ENCODE measurements at regions of chr19 and their contacts with region 1.

Region 1: GRCh38 chr19:16382775-16383543 is 58.3 kb downstream of the KLF2 start:
- DNase-seq: peak; percentile 95
- H3K4me3 ChIP-seq: no peak overlapping the region
- H3K27ac ChIP-seq: peak overlapping the region; percentile 79 to 91 (median 86)
- H3K4me1 ChIP-seq: peaks cover 0 to 33% (median 29%) of the 10 kb centered on the region in 4 donors
- H3K27me3 ChIP-seq: no peaks in the 10 kb centered on the region
- CTCF ChIP-seq: peak; percentile 80 to 86 (median 82)
- EP300 ChIP-seq: no peak
- POLR2A ChIP-seq: no peak

Region 2: GRCh38 chr19:16247353-16248182 is 135.4 kb before region 1 on chr19:
- intact Hi-C with region 1: loop called (anchors 1 kb)
- DNase-seq: peak; percentile 94
- H3K4me3 ChIP-seq: no peak overlapping the region
- H3K27ac ChIP-seq: no peak overlapping the region
- H3K4me1 ChIP-seq: peaks cover 0 to 7% (median 0%) of the 10 kb centered on the region in 4 donors
- H3K27me3 ChIP-seq: no peaks in the 10 kb centered on the region
- CTCF ChIP-seq: peak; percentile 92 to 99 (median 96)
- EP300 ChIP-seq: no peak
- POLR2A ChIP-seq: no peak

Region 3: DNA sequence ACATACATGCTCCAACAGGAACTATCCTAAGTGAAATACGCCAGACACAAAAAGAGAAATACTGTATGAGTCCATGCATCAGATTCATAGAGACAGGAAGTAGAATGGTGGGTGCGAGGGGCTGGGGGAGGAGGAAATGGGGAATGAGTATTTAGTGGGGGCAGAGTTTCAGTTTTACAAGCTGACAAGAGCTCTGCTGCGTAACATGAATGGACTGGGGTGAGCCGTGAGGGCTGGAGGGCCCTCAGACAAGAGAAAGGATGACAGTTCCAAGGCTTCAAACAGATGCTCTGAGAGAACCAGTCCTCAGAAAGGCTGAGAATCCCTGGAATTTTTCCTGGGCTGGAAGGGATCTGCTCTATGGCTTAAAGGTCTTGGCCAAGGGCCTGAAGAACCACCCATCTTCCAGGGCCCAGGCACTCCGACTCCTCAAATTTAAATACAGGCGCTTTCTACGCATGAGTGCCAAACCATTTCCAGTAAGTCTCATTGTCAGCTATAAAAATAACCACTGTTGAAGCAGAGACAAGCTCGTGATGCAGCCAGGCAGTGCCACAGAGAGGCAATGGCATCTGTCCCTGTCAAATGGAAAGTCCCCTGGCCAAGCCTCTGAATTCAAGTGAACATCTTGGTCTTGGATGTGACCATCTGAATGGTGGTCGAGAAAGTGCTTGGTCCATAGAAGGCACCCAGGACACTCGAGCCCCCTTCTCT is 40.8 kb before region 1 on chr19:
- intact Hi-C with region 1: loop called (anchors 5 kb)
- DNase-seq: no peak
- H3K4me3 ChIP-seq: no peak overlapping the region
- H3K27ac ChIP-seq: peak overlapping the region; percentile 69 to 88 (median 82)
- H3K4me1 ChIP-seq: peaks cover 0 to 46% (median 28%) of the 10 kb centered on the region in 4 donors
- H3K27me3 ChIP-seq: no peaks in the 10 kb centered on the region
- CTCF ChIP-seq: no peak
- EP300 ChIP-seq: peak in 2 of 4 donors; percentile 45 to 91
- POLR2A ChIP-seq: no peak

Region 4: DNA sequence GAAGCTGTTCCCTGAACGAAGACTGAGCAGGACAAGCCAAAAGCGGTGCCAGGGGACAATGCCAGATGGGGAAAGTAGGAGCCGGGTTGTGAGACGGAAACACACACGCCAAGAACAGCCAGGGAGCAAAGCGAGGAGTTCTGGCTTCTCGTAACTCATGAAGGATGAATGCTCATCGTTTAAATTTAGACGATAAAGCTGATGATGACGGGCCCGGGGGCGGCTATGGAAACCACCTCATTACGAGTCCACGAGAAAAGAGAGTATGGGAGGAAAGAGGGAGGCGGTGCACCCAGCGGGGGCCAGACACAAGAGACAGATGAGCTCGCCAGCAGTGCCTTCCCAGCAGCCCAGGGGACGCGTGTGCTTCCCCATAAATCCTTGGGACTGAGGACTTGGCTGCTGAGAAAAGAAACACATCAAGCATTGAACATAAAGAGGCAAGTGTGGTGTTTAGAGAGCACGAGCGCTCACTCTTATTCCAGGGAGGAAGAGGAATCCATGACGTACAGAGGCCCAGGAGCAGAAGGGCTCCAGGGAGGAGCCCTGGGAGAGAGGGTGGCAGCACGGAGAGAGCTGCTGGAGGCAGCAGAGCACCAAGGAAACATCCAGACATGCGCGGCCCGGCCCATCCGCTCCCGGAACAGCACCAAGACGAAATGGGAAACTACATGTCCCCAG is 18.1 kb after region 1 on chr19:
- intact Hi-C with region 1: no loop called
- DNase-seq: no peak
- H3K4me3 ChIP-seq: no peak overlapping the region
- H3K27ac ChIP-seq: peak overlapping the region in 1 of 4 donors; percentile 72
- H3K4me1 ChIP-seq: peaks cover 0 to 14% (median 5%) of the 10 kb centered on the region in 4 donors
- H3K27me3 ChIP-seq: no peaks in the 10 kb centered on the region
- CTCF ChIP-seq: no peak
- EP300 ChIP-seq: no peak
- POLR2A ChIP-seq: no peak

Measured in sigmoid colon (tissue), 7 donors.